ENCODE measurements at regions of chr11 and their contacts with region 1.

Region 1: DNA sequence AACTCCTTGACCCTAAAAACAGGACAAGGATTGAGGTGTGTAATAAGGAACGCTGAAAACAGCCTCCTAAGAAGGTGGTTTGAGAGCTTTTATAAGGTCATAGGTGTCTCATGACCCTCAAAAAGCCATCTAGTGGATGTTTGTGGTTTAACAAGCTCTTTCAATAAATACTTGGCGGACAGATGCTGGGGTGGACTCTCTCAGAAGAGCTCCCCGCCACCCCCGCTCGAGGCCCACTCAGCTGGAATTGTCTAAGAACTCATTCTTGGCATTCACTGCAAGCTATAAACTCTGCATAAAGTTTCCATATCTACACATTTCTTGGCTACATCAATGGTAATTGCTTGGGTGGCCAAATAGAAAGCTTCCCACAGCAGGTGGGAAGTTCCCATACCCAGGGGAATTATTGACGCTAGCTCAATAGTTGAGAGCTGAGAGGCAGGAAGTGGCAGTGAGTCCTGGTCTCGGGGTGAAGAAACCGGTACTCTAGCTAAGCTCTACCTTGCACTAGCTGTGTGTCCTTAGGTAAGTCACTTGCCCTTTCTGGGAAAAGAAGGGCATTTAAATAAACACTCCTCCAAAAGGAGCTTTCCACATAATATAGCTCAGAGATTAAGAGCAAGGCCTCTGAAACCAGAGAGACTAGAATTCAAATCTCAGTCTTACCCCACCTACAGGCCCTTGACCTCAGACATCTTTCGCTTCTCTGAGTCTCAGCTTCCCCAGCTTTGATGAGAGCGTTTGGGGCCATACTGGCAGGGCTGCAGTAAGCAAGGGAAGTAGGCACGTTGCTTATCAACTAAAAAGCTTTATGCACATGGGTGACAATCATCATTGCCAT is 6.4 kb downstream of the MS4A15 start:
- DNase-seq: no peak
- H3K4me3 ChIP-seq: no peak overlapping the region
- H3K27ac ChIP-seq: no peak overlapping the region
- H3K4me1 ChIP-seq: no peaks in the 10 kb centered on the region
- H3K27me3 ChIP-seq: no peaks in the 10 kb centered on the region
- CTCF ChIP-seq: peak; percentile 18

Region 2: GRCh38 chr11:60657888-60658287 is 105.2 kb before region 1 on chr11:
- intact Hi-C with region 1: loop called (anchors 5 kb)
- DNase-seq: peak; percentile 33
- H3K4me3 ChIP-seq: no peak overlapping the region
- H3K27ac ChIP-seq: no peak overlapping the region
- H3K4me1 ChIP-seq: no peaks in the 10 kb centered on the region
- H3K27me3 ChIP-seq: no peaks in the 10 kb centered on the region
- CTCF ChIP-seq: no peak

Measured in colonic mucosa (tissue), 4 donors.